ENCODE measurements at regions of chr18 and their contacts with region 1.

Region 1: GRCh38 chr18:74551936-74552555 is 17.7 kb downstream of the CNDP1 start:
- DNase-seq: peak; percentile 67 to 90
- ATAC-seq: peak; percentile 92 to 99 (median 99)
- H3K4me3 ChIP-seq: no peak overlapping the region
- H3K4me3 Mint-ChIP-seq: no peak overlapping the region
- H3K27ac ChIP-seq: no peak overlapping the region
- H3K27ac Mint-ChIP-seq: no peak overlapping the region
- H3K4me1 ChIP-seq: no peaks in the 10 kb centered on the region
- H3K4me1 Mint-ChIP-seq: no peaks in the 10 kb centered on the region
- H3K27me3 ChIP-seq: peaks cover 2% of the 10 kb centered on the region
- H3K27me3 Mint-ChIP-seq: peaks cover 14 to 18% of the 10 kb centered on the region in 2 donors
- CTCF ChIP-seq: peak; percentile 92

Region 2: DNA sequence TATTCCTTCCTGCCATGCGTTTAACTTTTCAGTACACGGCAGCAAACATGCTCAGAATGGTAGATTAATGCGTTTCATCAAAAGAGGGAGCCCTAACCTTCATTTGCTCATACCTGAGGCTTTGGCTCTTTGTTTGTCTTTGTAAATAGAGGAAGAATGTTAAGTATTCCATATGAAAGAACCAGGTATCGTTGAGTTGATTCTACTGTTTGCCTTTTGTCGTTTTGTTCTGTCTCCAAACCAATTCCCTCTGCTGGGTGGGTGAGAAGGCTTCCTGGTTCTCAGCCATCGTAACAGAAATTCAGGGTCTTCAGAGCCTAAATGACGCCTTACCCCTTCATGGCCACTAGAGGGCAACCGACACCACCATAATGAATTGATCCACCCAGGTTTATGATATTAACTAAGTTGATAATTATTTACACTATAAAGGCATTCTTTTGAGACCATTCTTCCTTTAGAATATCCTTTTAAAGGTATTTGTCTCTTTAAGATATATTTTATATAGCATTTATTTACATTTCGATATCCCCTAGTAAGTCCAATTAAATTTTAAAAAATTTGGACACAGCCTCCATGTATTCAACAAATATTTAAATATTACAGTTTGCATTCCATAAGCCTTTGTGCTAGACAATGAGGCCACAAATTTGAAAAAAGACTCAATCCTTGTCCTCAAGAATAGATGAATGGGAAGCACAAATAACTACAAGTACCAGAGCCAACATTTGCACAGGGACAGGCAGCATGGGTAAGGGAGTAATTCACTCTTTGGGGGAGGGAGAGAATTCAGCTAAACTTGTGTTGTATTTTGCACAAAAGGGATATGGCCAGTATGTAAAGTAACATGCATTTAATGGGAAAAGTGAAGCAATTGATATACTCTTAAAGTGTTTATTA is 355.6 kb before region 1 on chr18:
- intact Hi-C with region 1: loop called (anchors 1 kb)
- DNase-seq: peak in 1 of 2 donors; percentile 87
- ATAC-seq: peak; percentile 82 to 98 (median 97)
- H3K4me3 ChIP-seq: no peak overlapping the region
- H3K4me3 Mint-ChIP-seq: peak overlapping the region; percentile 79
- H3K27ac ChIP-seq: no peak overlapping the region
- H3K27ac Mint-ChIP-seq: peak overlapping the region; percentile 12 to 52
- H3K4me1 ChIP-seq: no peaks in the 10 kb centered on the region
- H3K4me1 Mint-ChIP-seq: peaks cover 6 to 8% of the 10 kb centered on the region in 2 donors
- H3K27me3 ChIP-seq: no peaks in the 10 kb centered on the region
- H3K27me3 Mint-ChIP-seq: peaks cover 0 to 3% of the 10 kb centered on the region in 2 donors
- CTCF ChIP-seq: peak; percentile 93

Region 3: DNA sequence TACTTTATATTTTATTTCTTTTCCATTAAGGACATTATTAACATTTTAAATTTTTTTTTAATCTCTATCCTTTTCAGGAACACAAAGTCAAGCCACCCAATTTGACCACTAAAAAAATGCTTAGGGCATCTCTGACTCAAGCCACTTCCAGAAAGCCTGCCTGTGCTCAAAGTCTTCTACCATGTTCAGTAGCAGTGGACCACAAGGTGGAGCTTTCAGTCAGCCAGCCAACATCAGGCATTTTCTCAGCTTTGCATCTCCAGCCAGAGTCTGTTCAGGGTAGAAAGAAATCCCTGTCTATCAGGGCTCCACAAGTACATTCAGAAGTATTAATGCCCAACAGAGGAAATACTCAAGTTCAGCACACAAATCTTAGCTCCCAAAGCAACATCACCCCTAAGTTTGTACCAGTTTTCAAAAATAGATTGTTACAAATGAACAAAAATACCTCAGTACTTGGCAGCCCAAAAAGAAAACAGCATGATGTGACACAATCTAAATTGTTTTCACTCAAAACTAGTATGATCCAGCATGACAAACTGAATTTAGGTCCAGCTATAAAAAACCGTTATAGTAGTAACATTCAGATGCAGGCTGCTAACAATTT is 198.8 kb before region 1 on chr18:
- intact Hi-C with region 1: loop called (anchors 1 kb)
- DNase-seq: peak in 1 of 2 donors; percentile 86
- ATAC-seq: peak in 2 of 3 donors; percentile 44 to 47
- H3K4me3 ChIP-seq: no peak overlapping the region
- H3K4me3 Mint-ChIP-seq: no peak overlapping the region
- H3K27ac ChIP-seq: no peak overlapping the region
- H3K27ac Mint-ChIP-seq: no peak overlapping the region
- H3K4me1 ChIP-seq: no peaks in the 10 kb centered on the region
- H3K4me1 Mint-ChIP-seq: peaks cover 0 to 5% of the 10 kb centered on the region in 2 donors
- H3K27me3 ChIP-seq: peaks cover 2% of the 10 kb centered on the region
- H3K27me3 Mint-ChIP-seq: no peaks in the 10 kb centered on the region
- CTCF ChIP-seq: peak; percentile 36

Region 4: DNA sequence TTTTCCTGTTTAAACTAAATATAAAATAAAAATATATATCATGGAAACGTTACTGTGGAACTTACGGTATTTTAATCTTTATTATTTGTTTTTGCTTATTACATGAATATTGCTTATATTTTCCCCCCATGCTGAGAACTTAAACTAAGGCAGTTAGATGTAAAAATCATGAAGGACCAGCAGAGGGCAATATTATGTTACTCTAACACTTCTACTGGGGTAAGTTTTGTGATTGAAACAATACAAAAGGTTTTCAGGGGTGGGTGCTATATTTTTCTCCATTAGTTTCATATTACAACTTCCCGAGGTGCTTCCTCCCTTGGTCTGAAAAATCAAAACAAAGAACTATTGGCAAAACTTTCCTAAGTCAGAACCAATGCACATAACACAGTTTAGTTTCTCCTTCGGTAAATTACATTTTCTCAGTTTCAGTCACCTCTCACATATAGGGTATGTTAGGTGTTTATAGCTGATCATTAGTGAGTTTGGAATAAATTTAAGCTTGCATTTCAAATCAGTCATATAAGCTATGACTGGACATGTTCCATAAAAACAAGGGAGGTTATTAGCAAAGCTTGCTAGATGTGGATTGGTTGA is 100.4 kb after region 1 on chr18:
- intact Hi-C with region 1: no loop called
- DNase-seq: peak in 1 of 2 donors; percentile 64
- ATAC-seq: peak in 2 of 3 donors; percentile 38 to 56
- H3K4me3 ChIP-seq: no peak overlapping the region
- H3K4me3 Mint-ChIP-seq: no peak overlapping the region
- H3K27ac ChIP-seq: no peak overlapping the region
- H3K27ac Mint-ChIP-seq: no peak overlapping the region
- H3K4me1 ChIP-seq: no peaks in the 10 kb centered on the region
- H3K4me1 Mint-ChIP-seq: no peaks in the 10 kb centered on the region
- H3K27me3 ChIP-seq: no peaks in the 10 kb centered on the region
- H3K27me3 Mint-ChIP-seq: no peaks in the 10 kb centered on the region
- CTCF ChIP-seq: peak; percentile 58

Region 5: DNA sequence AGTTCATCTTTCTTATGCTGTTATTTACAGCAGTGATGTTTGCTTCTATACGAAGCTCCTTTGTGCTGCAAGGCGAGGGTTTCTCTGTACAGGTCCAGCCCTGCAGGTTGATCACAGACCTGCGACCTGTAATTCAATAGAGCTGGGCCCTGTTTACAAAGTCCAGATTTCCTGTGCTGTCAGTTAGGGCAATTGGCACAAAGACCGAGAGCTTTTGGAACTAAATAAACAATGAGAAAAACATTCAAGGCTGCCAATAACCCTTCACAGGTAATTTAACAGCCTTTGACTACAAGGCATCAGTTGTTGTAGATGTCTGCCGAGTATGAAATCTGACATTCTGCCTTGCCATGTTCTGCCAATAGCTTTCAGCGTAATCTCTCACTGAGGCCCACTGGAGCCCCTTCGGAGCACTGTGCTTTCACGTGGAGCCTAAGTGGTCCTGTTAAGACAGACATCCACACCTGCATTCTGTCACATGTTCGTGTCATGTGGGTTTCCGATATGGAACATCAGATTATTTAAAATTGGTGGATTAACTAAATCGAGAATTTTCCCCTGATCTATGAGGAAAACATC is 424.4 kb after region 1 on chr18:
- intact Hi-C with region 1: no loop called
- DNase-seq: no peak
- ATAC-seq: no peak
- H3K4me3 ChIP-seq: no peak overlapping the region
- H3K4me3 Mint-ChIP-seq: no peak overlapping the region
- H3K27ac ChIP-seq: no peak overlapping the region
- H3K27ac Mint-ChIP-seq: no peak overlapping the region
- H3K4me1 ChIP-seq: no peaks in the 10 kb centered on the region
- H3K4me1 Mint-ChIP-seq: peaks cover 6 to 19% of the 10 kb centered on the region in 2 donors
- H3K27me3 ChIP-seq: no peaks in the 10 kb centered on the region
- H3K27me3 Mint-ChIP-seq: no peaks in the 10 kb centered on the region
- CTCF ChIP-seq: no peak